Activated CD4-positive, alpha-beta memory T cell treated with anti-CD3 and anti-CD28 coated beads for 36 hours (primary cell): ENCODE measurements at regions of chr1 and their contacts with region 1.

Region 1: GRCh38 chr1:12448746-12449177 is 169.2 kb downstream of the DHRS3 start:
- DNase-seq: no peak
- H3K4me3 Mint-ChIP-seq: no peak overlapping the region
- H3K27ac Mint-ChIP-seq: peak overlapping the region; percentile 88
- H3K4me1 Mint-ChIP-seq: peaks cover 65% of the 10 kb centered on the region
- H3K27me3 Mint-ChIP-seq: peaks cover 11% of the 10 kb centered on the region

Region 2: DNA sequence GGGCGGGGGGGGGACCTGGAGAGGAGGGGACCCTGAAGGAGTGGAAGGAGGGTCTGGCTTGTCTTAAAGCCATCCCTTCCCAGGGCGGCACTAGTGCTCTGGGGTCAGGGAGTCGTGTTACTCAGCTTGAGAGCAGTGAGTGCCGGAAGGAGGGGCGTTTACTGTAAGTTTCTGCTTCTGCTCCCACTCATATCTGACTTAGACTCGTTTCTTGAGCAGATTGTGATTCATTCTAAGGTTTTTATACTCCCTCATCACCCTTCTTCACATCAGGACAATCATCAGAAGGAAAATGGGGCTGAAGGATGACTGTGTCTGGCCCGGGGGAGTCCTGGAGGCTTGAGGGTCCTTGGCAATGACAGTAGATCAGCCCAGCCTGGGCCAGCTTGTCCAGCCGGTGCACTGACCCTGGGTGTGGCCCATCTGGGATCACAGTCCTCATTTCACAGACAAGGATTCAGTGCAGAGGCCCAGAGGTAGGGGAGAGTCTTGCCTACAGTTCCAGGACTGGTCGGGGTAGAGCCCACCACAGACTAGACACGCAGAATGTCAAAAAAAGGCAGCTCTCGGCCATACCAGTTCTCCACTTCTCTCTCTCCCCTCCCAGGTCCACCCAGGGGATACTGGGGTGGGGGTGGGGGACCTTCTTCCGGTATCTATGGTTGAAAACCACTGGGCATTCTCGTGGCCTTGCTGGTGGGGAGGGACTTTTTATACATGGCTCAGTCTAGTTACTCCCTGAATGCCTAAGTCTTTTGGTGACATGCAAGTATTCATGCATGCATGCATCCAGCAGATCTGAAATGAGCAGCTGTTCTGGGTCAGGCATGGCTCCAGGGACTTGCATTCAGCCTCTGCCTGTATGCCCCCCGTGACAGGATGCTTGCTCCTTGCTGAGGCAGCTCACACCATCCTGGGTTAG is 380.6 kb before region 1 on chr1:
- CTCF ChIA-PET with region 1: no interaction called
- POLR2A ChIA-PET with region 1: interaction called, 3 read pairs
- intact Hi-C with region 1: loop called (anchors 5 kb)
- DNase-seq: peak; percentile 89
- H3K4me3 Mint-ChIP-seq: peak overlapping the region; percentile 69
- H3K27ac Mint-ChIP-seq: peak overlapping the region; percentile 96
- H3K4me1 Mint-ChIP-seq: peaks cover 62% of the 10 kb centered on the region
- H3K27me3 Mint-ChIP-seq: peaks cover 32% of the 10 kb centered on the region

Region 3: DNA sequence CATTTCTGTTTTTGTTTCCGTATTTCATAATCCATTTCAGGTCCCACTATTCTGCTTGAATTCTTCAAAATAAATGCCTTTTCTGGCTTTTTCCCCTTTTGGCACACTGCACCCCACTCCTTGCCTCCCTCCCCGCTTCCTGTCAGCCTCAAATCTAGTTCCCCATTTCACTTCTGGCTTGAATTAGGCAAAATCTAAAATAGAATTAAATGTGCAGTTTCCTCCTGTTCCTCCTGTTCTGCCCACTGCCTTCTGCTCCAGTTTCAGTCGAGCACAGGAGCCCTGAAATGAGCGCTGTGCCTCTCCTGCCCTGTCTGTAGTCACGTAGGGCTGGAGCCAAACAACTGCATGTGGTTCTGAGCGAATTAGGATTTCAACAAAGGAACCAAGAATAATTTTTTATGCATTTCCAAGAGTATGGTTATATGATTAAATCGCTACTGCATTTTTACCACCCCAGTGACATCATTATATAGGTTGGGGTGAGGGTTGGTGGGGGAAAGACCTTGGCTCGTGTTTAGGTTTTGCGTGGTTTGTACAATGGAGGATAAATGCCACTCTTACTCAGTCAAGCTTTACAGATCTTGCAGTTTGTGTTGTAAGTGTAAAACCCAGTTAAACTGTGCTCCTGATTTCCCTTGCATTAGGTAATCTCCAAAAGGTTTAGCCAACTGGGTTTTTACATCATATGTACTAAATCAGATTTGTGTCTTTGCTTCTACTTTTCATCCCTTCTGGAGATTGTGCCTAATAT is 104.0 kb before region 1 on chr1:
- CTCF ChIA-PET with region 1: no interaction called
- POLR2A ChIA-PET with region 1: no interaction called
- intact Hi-C with region 1: loop called (anchors 1 kb)
- DNase-seq: peak; percentile 50
- H3K4me3 Mint-ChIP-seq: peak overlapping the region; percentile 65
- H3K27ac Mint-ChIP-seq: peak overlapping the region; percentile 85
- H3K4me1 Mint-ChIP-seq: peaks cover 55% of the 10 kb centered on the region
- H3K27me3 Mint-ChIP-seq: no peaks in the 10 kb centered on the region

Region 4: DNA sequence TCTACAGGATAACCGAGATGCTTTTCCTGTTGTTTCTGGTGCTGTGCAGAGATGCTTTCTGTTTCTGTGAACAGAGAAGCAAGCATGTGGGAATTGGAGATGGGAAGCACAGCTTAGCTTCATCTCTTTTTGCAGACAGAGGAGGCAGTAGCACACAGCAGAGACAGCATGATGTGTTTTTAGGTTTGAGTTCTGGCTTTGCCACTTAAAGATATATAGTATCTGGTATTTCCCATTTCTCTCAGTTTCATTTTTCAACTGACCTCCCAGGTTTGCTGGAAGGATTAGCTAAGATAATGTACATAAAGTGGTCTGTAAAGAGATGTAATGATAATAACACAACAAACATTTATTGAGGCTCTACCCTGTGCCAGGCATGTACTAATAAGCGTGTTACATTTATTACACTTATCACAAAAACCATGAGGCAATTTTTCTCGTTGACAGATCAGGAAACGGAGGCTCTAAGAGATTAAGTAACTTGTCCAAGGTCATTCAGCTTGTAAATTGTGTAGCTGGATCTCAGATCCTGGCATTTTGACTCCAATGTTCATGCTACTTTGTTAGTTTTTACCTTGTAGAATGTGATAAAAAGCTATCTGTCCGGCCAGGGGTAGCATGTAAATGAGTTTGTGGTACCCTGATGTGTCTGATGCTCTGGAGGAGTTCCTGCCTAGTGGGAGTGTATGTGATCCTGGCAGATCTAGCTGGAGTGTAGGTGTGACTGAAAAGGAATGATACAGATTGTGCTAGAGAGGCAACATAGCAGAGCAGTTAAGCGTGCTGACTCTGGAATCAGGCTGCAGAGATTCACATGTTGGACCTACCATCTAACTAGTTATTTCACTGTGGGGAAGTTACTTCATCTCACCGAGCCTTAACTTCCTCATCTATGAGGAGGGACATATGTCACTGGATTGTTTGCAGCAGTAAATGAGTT is 72.4 kb before region 1 on chr1:
- CTCF ChIA-PET with region 1: no interaction called
- POLR2A ChIA-PET with region 1: no interaction called
- intact Hi-C with region 1: no loop called
- DNase-seq: no peak
- H3K4me3 Mint-ChIP-seq: no peak overlapping the region
- H3K27ac Mint-ChIP-seq: no peak overlapping the region
- H3K4me1 Mint-ChIP-seq: peaks cover 5% of the 10 kb centered on the region
- H3K27me3 Mint-ChIP-seq: no peaks in the 10 kb centered on the region

Region 5: DNA sequence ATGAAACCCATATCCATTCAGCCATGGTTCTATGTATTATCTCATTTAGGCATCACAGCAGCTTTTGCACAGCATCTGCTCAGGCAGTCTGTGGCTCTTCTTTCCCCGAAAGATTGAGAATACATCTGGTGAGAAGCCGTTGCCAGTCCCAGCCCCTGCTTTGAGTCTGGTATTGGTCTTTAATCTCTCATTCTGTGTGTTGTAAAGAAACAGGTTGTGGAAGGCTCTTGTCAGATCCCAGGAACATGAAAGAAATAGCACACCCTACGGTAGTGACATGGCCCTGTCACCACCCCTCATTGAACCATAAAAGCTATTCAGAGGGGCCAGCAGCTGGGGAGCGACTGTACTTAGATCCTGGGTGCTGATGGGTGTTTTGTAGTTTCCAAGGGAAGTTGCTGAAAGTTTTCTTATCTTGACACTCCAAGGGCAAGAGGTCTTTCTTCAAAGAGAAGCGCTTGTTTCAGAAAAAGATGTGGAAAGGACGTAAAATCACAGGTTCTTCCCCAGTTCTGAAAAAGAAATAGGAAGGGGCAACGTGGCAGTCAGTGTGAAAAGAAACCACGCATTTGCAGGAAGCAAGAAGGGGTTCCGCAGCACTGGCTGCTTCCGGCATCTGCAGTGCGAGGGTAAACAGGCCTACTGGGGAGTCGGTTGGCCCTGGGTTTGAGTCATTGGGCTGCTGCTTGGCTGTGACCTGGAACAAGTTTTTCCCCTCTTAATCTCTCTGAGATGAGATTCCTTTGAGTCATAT is 24.2 kb after region 1 on chr1:
- CTCF ChIA-PET with region 1: interaction called, 3 read pairs
- POLR2A ChIA-PET with region 1: interaction called, 4 read pairs
- intact Hi-C with region 1: loop called (anchors 1 kb)
- DNase-seq: peak; percentile 91
- H3K4me3 Mint-ChIP-seq: peak overlapping the region; percentile 62
- H3K27ac Mint-ChIP-seq: peak overlapping the region; percentile 95
- H3K4me1 Mint-ChIP-seq: peaks cover 87% of the 10 kb centered on the region
- H3K27me3 Mint-ChIP-seq: no peaks in the 10 kb centered on the region

Region 6: DNA sequence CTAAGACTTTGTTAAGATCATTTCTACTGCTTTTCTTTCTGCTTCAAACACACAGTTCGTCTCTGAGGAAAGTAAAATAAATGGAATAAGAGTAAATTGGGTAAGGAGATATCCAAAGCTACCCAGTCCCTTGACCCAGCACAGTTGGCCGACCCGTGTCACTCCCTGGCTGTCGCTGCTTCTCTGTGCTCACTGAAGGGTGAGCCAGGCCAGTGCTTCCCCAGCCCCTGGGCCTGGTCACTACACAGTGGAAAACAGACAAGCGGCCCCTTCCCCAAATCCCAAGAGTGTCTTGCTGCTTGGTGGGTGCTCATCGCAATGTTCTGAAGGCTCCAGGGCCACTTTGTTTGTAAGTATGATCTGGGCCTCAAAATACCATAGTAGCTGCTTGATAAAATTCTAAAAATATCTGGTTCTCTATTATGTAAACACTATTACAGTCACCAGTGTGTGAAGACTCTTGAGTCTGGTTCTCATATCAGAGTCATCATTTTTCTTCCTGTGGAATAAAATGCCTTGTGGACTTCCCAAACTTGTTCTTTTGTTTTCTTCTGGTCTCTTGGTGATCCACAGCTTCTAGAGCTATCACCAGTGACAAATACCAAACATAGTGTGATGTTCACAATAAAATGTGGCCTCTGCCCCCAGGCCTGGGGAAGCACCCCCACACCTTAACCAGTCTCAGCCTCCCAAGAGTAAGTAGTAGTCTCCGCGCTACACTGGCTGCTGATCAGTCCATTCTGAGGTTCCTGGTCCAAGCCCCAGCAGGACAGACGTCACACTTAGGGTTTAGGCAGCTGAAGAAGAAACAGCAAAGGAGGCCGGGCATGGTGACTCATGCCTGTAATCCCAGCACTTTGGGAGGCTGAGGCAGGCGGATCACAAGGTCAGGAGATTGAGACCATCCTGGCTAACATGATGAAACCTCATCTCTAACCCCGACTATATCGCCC is 63.0 kb after region 1 on chr1:
- CTCF ChIA-PET with region 1: interaction called, 3 read pairs
- POLR2A ChIA-PET with region 1: interaction called, 7 read pairs
- intact Hi-C with region 1: loop called (anchors 1 kb)
- DNase-seq: no peak
- H3K4me3 Mint-ChIP-seq: peak overlapping the region; percentile 85
- H3K27ac Mint-ChIP-seq: peak overlapping the region; percentile 100
- H3K4me1 Mint-ChIP-seq: peaks cover 47% of the 10 kb centered on the region
- H3K27me3 Mint-ChIP-seq: no peaks in the 10 kb centered on the region

Region 7: GRCh38 chr1:12604114-12604874 is 155.5 kb after region 1 on chr1:
- CTCF ChIA-PET with region 1: no interaction called
- POLR2A ChIA-PET with region 1: interaction called, 3 read pairs
- intact Hi-C with region 1: loop called (anchors 1 kb)
- DNase-seq: peak; percentile 86
- H3K4me3 Mint-ChIP-seq: peak overlapping the region; percentile 39
- H3K27ac Mint-ChIP-seq: peak overlapping the region; percentile 66
- H3K4me1 Mint-ChIP-seq: peaks cover 58% of the 10 kb centered on the region
- H3K27me3 Mint-ChIP-seq: no peaks in the 10 kb centered on the region